ENCODE measurements at regions of chr16 and their contacts with region 1.

Region 1: DNA sequence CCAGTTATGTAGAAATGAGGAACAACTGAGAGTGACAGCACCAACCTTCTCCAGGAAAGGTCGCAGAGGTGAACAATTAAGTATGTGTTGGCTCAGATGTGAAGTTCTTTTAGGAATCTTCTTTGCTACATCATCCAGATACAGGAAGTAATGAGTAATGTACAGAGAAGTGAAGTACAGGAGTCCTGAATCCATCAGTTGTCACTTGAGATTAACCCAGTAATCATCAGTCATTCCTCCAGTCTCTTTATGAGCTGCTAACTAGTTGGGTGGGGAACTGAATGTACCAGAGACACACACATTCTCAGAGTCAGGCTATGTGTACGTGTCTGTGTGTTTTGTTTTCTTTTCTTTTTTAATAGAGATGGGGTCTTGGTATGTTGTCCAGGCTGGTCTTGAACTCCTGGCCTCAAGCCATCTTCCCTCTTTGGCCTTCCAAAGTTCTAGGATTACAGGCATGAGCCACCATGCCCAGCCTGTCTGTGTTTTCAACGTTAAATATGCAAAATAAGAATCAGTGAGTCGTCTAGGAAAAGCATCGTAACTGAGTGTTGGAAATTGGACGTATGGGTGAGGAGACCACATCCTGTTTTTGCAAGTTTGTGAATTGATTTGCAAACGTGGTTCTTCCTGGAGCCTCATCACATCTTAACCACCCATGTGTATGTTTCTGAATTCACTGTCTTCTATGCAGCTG is 19.9 kb downstream of the ZNF200 start:
- DNase-seq: peak; percentile 69
- H3K4me3 Mint-ChIP-seq: peak overlapping the region; percentile 56
- H3K27ac Mint-ChIP-seq: peak overlapping the region; percentile 99
- H3K4me1 Mint-ChIP-seq: peaks cover 44% of the 10 kb centered on the region
- H3K27me3 Mint-ChIP-seq: no peaks in the 10 kb centered on the region

Region 2: GRCh38 chr16:3074860-3075522 is 140.1 kb before region 1 on chr16:
- CTCF ChIA-PET with region 1: no interaction called
- POLR2A ChIA-PET with region 1: no interaction called
- intact Hi-C with region 1: no loop called
- DNase-seq: peak; percentile 94
- H3K4me3 Mint-ChIP-seq: peak overlapping the region; percentile 78
- H3K27ac Mint-ChIP-seq: peak overlapping the region; percentile 99
- H3K4me1 Mint-ChIP-seq: peaks cover 89% of the 10 kb centered on the region
- H3K27me3 Mint-ChIP-seq: no peaks in the 10 kb centered on the region

Region 3: DNA sequence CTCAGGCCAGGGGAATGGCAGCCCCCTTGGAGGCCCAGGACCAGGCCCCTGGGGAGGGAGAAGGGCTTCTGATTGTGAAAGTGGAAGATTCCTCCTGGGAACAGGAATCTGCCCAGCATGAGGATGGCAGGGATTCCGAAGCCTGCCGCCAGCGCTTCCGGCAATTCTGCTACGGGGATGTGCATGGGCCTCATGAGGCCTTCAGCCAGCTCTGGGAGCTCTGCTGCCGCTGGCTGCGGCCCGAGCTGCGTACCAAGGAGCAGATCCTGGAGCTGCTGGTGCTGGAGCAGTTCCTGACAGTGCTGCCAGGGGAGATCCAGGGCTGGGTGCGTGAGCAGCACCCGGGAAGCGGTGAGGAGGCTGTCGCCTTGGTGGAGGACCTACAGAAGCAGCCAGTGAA is 77.8 kb before region 1 on chr16:
- CTCF ChIA-PET with region 1: no interaction called
- POLR2A ChIA-PET with region 1: no interaction called
- intact Hi-C with region 1: no loop called
- DNase-seq: no peak
- H3K4me3 Mint-ChIP-seq: no peak overlapping the region
- H3K27ac Mint-ChIP-seq: no peak overlapping the region
- H3K4me1 Mint-ChIP-seq: peaks cover 19% of the 10 kb centered on the region
- H3K27me3 Mint-ChIP-seq: no peaks in the 10 kb centered on the region

Region 4: DNA sequence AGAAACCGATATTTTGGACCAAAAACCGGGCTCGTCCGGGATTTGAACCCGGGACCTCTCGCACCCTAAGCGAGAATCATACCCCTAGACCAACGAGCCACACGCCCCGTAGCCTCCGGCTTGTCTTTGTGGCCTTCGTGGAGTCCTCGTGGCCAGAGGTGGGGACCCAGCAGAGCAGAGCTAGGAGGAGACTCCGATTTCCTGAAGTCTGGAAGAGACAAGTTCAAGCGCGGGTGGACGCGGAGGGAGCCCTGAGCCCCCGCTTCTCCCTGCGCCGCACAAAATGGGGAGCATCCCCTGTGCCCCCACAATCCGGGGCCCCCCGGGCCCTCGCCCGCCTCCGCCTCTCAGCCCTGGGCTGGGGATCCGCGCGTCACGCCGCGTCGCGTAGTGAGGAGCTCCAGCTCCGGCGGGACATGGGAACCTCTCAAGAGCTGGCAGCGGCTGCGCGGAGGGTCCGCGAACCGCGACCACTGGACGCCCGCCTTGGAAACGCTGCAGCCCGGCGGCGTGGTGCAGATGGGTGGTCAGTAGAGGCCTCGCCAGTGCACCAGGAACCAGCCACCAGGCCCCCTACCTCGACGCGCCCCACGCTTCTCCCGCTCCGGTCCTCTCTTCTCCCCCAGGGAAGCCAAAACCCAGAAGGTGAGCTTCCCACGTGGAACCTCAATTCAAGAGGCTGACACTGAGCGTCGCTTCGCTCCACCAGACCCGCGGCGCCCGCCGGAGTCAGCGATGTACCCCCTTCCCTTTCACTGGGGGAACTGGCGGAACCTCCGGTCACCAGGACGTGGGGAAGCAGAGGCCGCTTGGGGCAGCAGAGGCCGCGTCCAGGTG is 32.2 kb before region 1 on chr16:
- CTCF ChIA-PET with region 1: interaction called, 3 read pairs
- POLR2A ChIA-PET with region 1: interaction called, 3 read pairs
- intact Hi-C with region 1: loop called (anchors 5 kb)
- DNase-seq: peak; percentile 77
- H3K4me3 Mint-ChIP-seq: peak overlapping the region; percentile 78
- H3K27ac Mint-ChIP-seq: peak overlapping the region; percentile 84
- H3K4me1 Mint-ChIP-seq: peaks cover 27% of the 10 kb centered on the region
- H3K27me3 Mint-ChIP-seq: peaks cover 70% of the 10 kb centered on the region

Region 5: GRCh38 chr16:3188925-3189825 is 25.9 kb before region 1 on chr16:
- CTCF ChIA-PET with region 1: interaction called, 3 read pairs
- POLR2A ChIA-PET with region 1: interaction called, 3 read pairs
- intact Hi-C with region 1: loop called (anchors 2 kb)
- DNase-seq: peak; percentile 79
- H3K4me3 Mint-ChIP-seq: peak overlapping the region; percentile 69
- H3K27ac Mint-ChIP-seq: peak overlapping the region; percentile 70
- H3K4me1 Mint-ChIP-seq: peaks cover 46% of the 10 kb centered on the region
- H3K27me3 Mint-ChIP-seq: peaks cover 67% of the 10 kb centered on the region

Region 6: GRCh38 chr16:3234543-3235541 is 19.8 kb after region 1 on chr16 and contains the start of gene ZNF200:
- CTCF ChIA-PET with region 1: no interaction called
- POLR2A ChIA-PET with region 1: interaction called, 13 read pairs
- intact Hi-C with region 1: loop called (anchors 1 kb)
- DNase-seq: peak; percentile 97
- H3K4me3 Mint-ChIP-seq: peak within 1 kb of the TSS; percentile 83
- H3K27ac Mint-ChIP-seq: peak within 1 kb of the TSS; percentile 92
- H3K4me1 Mint-ChIP-seq: peaks cover 30% of the 10 kb centered on the region
- H3K27me3 Mint-ChIP-seq: no peaks in the 10 kb centered on the region
- total RNA-seq, gene ZNF200: 10.6 to 11.5 TPM

Region 7: DNA sequence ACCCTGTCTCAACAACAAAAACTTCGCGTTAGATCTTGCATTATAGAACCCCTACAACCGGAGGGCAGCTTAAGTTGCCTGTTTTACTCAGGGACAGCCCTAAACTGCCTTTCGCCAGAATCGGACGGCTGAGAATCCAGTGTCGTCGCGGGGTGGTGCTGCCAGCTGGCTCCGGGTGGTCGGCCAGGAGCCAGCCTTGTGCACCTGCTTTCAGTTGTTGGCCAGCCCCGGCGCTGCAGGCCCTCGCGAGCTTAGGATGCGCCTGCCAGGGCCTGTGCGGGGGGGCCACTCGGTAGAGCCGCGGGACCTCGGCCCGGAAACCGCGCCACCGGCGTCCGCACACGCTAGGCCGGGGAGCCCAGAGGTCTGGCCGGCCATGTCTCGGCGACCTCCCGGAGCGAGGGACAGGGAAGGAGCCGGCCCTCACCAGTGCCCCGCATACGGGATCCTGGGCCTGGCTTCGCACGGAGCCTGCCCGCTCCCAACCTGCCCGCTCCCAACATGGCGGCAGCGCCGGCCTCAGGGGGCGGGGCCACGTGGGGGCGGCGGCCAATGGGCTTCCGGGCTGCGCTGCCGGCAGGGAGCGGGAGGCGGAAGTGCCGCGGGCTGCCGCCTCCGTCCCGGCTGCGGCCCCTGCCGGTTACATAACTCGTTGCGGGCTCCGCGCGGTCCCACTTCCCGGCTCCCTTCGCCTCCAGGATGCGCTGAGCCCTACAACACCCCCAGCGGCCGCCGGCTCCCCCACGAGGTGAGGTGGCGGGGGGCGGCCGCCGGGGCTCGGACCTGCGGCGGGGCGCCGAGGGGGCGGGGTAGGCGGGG is 242.6 kb after region 1 on chr16:
- CTCF ChIA-PET with region 1: no interaction called
- POLR2A ChIA-PET with region 1: no interaction called
- intact Hi-C with region 1: loop called (anchors 1 kb)
- DNase-seq: peak; percentile 92
- H3K4me3 Mint-ChIP-seq: peak overlapping the region; percentile 80
- H3K27ac Mint-ChIP-seq: peak overlapping the region; percentile 90
- H3K4me1 Mint-ChIP-seq: peaks cover 41% of the 10 kb centered on the region
- H3K27me3 Mint-ChIP-seq: no peaks in the 10 kb centered on the region